Transverse colon (tissue), 4 donors: ENCODE measurements at regions of chr2 and their contacts with region 1.

Region 1: GRCh38 chr2:219402665-219403515 is 15.2 kb upstream of the DNPEP start:
- DNase-seq: peak; percentile 59
- H3K4me3 ChIP-seq: no peak overlapping the region
- H3K27ac ChIP-seq: peak overlapping the region; percentile 79 to 91 (median 86)
- H3K4me1 ChIP-seq: peaks cover 17 to 45% (median 28%) of the 10 kb centered on the region in 4 donors
- H3K27me3 ChIP-seq: no peaks in the 10 kb centered on the region
- CTCF ChIP-seq: peak; percentile 87 to 93 (median 89)
- EP300 ChIP-seq: no peak
- POLR2A ChIP-seq: no peak

Region 2: GRCh38 chr2:219419331-219420197 is 16.7 kb after region 1 on chr2:
- in situ Hi-C with region 1: no loop called
- intact Hi-C with region 1: loop called (anchors 2 kb)
- DNase-seq: no peak
- H3K4me3 ChIP-seq: peak overlapping the region; percentile 36 to 55 (median 48)
- H3K27ac ChIP-seq: peak overlapping the region; percentile 86 to 96 (median 89)
- H3K4me1 ChIP-seq: peaks cover 6 to 15% (median 10%) of the 10 kb centered on the region in 4 donors
- H3K27me3 ChIP-seq: peaks cover 25% of the 10 kb centered on the region
- CTCF ChIP-seq: no peak
- EP300 ChIP-seq: no peak
- POLR2A ChIP-seq: no peak

Region 3: GRCh38 chr2:219452838-219453317 is 50.0 kb after region 1 on chr2:
- in situ Hi-C with region 1: no loop called
- intact Hi-C with region 1: loop called (anchors 5 kb)
- DNase-seq: peak; percentile 39
- H3K4me3 ChIP-seq: no peak overlapping the region
- H3K27ac ChIP-seq: peak overlapping the region; percentile 83 to 96 (median 85)
- H3K4me1 ChIP-seq: peaks cover 0 to 15% (median 8%) of the 10 kb centered on the region in 4 donors
- H3K27me3 ChIP-seq: peaks cover 34% of the 10 kb centered on the region
- CTCF ChIP-seq: no peak
- EP300 ChIP-seq: no peak
- POLR2A ChIP-seq: no peak

Region 4: DNA sequence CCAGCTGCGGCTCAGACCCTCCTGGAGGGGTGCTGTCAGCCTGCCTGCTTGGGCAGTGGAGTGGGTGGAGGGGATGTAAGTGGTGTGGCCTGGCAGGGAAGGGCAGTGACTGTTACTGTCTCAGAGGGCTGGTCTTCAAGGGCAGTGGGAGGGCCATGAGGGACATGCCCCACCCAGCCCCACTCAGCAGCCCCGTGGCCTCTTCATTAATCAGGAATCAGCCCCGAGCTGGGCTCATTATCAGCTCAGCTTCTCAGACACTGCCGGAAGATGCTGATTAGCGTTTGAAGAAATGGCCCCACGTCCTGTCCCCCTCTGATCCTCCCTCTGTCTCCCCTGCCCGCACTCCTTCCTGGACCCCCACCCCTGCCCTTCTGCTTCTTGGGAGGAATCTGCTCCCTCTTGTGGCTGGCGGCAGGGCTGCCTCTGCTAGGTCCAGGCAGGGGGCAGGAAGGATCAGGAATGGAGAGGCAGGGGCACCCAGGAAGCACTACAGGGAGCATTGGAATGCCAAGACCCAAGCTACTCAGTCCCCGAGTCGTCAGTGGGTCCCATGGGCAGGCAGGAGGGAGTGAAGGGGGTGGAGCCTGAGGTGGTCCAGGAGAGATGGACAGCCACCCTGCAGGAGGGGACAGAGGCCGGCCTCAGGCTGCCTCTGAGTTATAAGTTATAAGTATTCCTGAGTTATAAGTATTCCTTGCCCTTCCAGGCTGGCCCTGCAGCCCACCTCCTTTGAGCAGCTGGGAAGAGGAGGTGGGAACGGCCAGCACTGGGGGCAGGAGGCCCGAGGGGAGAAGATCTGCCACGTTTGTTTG is 118.4 kb after region 1 on chr2:
- in situ Hi-C with region 1: loop called in 3 of 4 experiments (anchors 10 kb)
- intact Hi-C with region 1: no loop called
- DNase-seq: peak; percentile 21
- H3K4me3 ChIP-seq: no peak overlapping the region
- H3K27ac ChIP-seq: peak overlapping the region in 3 of 4 donors; percentile 70 to 81 (median 73)
- H3K4me1 ChIP-seq: peaks cover 8 to 18% (median 11%) of the 10 kb centered on the region in 4 donors
- H3K27me3 ChIP-seq: peaks cover 78% of the 10 kb centered on the region
- CTCF ChIP-seq: peak; percentile 37 to 57 (median 48)
- EP300 ChIP-seq: no peak
- POLR2A ChIP-seq: no peak

Region 5: DNA sequence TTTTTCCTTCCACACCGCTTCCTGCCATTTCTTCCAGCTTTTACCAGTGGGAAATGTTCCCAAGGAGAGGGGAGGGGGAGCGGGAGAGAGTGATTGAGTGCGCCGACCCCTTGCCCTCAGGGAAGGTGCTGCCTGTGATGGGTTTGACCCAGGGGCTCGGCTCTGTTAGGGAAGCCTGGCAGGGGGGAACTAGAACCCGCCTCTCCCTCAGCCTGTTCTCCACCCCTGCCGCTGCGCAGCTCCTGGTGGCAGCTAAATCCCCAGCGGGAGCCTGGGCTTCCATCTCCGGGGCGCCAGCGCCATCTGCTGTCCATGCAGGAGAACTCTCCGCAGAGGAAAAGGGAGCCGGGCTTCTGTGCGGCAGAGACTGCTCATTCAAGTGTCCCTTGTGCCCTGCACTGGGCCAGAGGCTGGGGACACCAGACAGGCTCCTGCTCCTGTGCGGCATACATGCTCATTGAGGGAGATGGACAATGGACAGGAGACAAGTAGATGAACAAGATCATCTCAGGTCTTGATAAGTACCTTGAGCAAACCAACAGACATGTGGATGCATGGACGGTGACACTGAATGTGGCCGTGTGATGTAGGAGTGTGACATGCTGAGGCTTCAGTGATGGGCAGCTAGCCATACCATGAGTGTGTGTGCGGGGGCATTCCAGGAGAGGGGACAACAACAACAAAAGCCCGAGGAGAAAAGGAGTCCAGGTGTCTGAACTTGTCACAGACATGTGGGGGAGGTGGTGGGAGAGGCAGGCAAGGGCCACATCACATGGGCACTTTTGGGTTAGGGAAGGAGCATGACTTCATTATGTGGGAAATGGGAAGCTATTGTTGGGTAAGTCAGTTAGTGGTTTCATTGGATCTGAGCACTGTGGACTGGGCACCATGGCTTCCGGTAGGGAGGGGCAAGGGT is 127.4 kb after region 1 on chr2:
- in situ Hi-C with region 1: loop called in 3 of 4 experiments (anchors 10 kb)
- intact Hi-C with region 1: loop called (anchors 2 kb)
- DNase-seq: peak; percentile 84
- H3K4me3 ChIP-seq: no peak overlapping the region
- H3K27ac ChIP-seq: no peak overlapping the region
- H3K4me1 ChIP-seq: peaks cover 0 to 5% (median 0%) of the 10 kb centered on the region in 4 donors
- H3K27me3 ChIP-seq: peaks cover 63% of the 10 kb centered on the region
- CTCF ChIP-seq: peak; percentile 95 to 98 (median 97)
- EP300 ChIP-seq: no peak
- POLR2A ChIP-seq: no peak